Uterus (tissue), 4 donors: ENCODE measurements at regions of chr10 and their contacts with region 1.

Region 1: DNA sequence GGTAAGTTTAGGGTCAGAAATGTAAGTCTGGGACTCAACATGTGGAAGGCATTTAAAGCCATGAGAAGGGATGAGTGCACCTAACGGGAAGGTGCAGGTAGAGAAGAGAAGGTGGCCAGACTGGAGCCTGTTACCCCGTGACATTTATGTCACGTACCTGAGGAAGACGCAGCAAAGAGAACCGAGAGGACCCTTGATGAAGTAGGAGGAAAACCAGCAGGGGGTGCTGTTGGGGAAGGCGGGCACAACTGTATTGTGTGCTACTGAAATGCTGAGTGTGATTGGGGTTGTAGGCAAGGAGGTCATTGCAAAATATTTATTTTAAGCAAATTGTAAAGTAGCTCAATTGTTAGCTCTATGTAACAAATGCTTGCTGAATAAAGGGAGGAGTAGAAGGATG is 338.2 kb upstream of the PRKCQ start:
- DNase-seq: peak in 1 of 2 donors; percentile 25
- H3K4me3 ChIP-seq: no peak overlapping the region
- H3K27ac ChIP-seq: no peak overlapping the region
- H3K4me1 ChIP-seq: no peaks in the 10 kb centered on the region
- H3K27me3 ChIP-seq: no peaks in the 10 kb centered on the region
- CTCF ChIP-seq: peak in 2 of 4 experiments; percentile 17 to 21
- POLR2A ChIP-seq: no peak

Region 2: DNA sequence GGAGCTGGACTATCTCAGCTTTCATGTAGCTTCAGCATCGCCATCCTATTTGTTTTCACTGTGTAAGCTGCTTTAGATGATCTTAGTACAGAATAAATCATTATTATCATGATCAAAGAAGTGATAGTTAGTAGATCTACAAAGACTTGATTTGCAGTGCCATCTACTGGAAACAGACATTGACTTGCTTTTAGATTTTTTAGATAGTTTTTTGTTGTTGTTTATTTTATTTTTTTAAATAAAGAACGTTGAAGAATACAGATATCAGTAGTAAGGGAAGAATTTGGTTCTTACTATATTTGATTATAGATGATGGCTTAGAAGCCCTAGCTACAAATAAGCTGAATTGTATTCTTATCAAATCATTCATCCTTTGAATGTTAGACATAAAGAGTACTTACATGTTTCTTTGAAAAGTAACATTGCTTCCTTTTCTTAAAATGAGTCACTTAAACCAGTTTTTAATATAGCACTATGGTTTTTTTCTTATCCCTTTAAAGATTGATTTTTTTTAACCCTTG is 498.9 kb after region 1 on chr10:
- intact Hi-C with region 1: loop called (anchors 5 kb)
- DNase-seq: no peak
- H3K4me3 ChIP-seq: no peak overlapping the region
- H3K27ac ChIP-seq: no peak overlapping the region
- H3K4me1 ChIP-seq: peaks cover 0 to 5% of the 10 kb centered on the region in 2 donors
- H3K27me3 ChIP-seq: peaks cover 0 to 9% of the 10 kb centered on the region in 2 donors
- CTCF ChIP-seq: peak; percentile 47 to 64 (median 53)
- POLR2A ChIP-seq: no peak